IMR-90 (cell line): ENCODE measurements at regions of chr16 and their contacts with region 1.

Region 1: DNA sequence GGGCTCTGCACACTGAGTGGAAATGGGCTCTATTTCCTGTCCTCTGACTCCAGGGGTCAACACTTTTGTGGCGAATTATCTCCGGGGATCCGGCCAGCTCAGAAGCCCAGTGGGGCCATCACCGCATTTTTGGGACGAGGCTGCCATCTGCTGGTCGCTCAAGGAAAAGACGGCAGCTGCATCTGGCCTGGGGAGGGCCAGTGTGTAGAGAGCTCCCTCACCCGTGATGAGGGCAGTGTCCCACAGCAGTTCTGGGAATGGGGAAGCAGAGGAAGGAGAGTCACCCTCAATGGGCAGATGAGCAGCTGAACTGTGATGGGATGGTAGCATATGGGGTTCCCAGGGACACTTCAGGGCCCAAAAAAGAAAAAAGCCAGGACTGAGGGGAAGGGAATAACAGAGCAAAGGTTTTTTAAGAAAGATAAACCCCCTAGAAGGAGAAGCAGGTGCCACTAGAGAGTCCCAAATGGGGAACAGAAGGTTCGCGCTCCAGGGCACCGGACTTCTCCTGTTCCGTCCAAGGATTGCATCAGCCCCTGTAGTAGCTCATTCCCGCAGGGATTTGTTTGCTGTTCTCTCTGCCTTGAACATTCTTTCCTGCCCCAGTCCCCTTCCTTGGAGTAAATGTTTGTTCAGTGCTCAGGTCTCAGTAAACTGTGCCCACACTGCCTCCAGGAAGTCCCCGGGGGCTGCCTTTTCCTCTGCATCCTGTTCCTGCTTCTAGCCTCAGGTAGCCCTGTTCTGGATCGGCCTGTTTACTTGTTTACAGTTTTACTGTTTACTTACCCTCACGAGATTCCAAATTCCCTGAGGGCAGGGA is 9.3 kb upstream of the ABCC12 start:
- DNase-seq: peak; percentile 65
- ATAC-seq: peak; percentile 99
- H3K4me3 ChIP-seq: no peak overlapping the region
- H3K27ac ChIP-seq: no peak overlapping the region
- H3K4me1 ChIP-seq: no peaks in the 10 kb centered on the region; the same call in 1 of the 2 replicates
- H3K27me3 ChIP-seq: peaks cover 2% of the 10 kb centered on the region; the same call in 1 of the 2 replicates
- CTCF ChIP-seq: peak; percentile 93
- POLR2A ChIP-seq: no peak
- RAD21 ChIP-seq: peak; percentile 98

Region 2: GRCh38 chr16:46947900-46948547 is 1217.1 kb before region 1 on chr16:
- CTCF ChIA-PET with region 1: interaction called, 3 read pairs
- POLR2A ChIA-PET with region 1: no interaction called
- dilution Hi-C with region 1: no loop called
- in situ Hi-C with region 1: loop called (anchors 5 kb)
- intact Hi-C with region 1: loop called (anchors 1 kb)
- DNase-seq: peak; percentile 49
- ATAC-seq: peak; percentile 87
- H3K4me3 ChIP-seq: no peak overlapping the region
- H3K27ac ChIP-seq: no peak overlapping the region
- H3K4me1 ChIP-seq: no peaks in the 10 kb centered on the region
- H3K27me3 ChIP-seq: no peaks in the 10 kb centered on the region
- CTCF ChIP-seq: peak; percentile 67
- POLR2A ChIP-seq: no peak
- RAD21 ChIP-seq: peak; percentile 73

Region 3: DNA sequence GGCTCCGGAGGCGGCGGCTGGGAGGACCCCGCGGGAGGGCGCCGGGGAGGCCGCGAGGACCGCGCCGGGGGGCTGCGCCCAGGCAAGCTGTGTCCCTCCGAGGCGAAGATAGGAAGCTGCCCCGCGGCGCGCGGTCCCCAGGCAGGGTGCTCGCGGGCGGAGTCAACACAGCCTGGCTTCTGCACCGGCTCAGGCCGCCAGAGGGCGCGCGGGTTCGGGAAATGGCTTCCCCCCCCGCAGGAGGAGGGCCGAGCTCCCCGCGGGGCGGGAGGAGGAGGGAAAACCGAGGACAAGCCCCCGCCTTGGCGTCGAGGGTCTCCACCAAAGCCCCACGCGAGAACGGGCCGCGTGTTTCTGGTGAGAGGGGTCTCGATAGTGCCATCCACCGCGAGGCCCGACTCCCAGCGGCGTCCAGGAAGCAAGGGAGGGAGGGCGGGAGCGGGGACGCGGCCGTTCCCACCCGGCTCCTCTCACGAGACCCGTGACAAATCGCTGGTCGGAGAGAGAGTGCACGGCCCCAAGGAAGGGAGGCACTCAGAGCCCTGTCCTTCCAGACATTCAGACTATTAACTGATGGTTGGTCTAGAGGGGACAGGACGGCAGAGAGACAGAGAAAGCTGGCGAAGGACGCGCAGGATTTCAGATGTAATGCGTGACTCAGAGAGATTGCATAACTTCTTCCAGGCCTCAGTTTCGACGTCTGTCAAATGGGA is 1127.2 kb before region 1 on chr16:
- CTCF ChIA-PET with region 1: interaction called, 7 read pairs
- POLR2A ChIA-PET with region 1: no interaction called
- dilution Hi-C with region 1: no loop called
- in situ Hi-C with region 1: loop called (anchors 5 kb)
- intact Hi-C with region 1: loop called (anchors 1 kb)
- DNase-seq: peak; percentile 62
- ATAC-seq: peak; percentile 99
- H3K4me3 ChIP-seq: peak overlapping the region; percentile 74
- H3K27ac ChIP-seq: peak overlapping the region; percentile 62
- H3K4me1 ChIP-seq: no peaks in the 10 kb centered on the region
- H3K27me3 ChIP-seq: peaks cover 4% of the 10 kb centered on the region
- CTCF ChIP-seq: peak; percentile 92
- POLR2A ChIP-seq: no peak
- RAD21 ChIP-seq: peak; percentile 75

Region 4: DNA sequence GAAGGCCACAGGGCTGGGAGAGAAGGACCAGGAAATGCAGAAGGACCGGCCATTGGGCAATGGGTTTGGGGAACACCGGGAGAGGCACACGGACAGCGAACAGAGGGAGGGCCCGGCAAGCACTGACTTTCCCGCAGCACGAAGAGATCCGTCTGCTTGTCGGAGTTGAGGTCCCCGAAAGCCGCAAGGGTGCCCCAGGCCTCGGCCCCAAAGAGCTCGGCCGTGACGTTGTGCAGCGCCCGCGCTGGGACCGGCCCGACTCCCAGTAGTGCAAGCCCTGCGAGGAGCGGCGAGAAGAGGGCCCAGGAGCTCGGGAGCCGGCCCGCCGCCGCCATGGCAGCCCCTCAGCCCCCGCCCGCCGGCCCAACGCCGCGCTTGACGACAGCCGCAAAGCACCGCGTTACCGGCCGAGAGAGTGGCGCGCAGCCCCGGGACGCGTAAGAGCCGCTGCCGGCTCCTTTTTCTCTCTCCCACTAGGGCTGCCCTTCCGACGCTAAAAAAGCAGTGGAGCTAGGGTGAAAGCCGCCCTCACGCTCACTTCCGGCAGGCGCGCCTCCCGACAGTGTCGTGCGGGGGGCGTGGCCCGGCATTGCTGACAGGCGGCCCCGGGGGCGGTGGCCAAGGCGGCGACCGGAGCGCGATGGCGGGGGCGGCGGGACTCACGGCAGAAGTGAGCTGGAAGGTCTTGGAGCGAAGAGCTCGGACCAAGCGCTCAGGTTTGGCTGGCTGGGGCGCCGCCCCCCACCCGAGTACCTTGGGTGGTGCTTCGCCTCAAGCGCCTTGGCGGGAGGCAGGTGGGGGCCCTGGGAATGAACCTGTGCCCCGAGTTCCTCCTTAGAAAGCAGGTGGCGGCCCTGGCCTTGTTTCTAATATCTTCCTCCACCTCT is 704.2 kb before region 1 on chr16 and contains the starts of genes ITFG1 and PHKB:
- CTCF ChIA-PET with region 1: no interaction called
- POLR2A ChIA-PET with region 1: no interaction called
- dilution Hi-C with region 1: no loop called
- in situ Hi-C with region 1: loop called (anchors 25 kb)
- intact Hi-C with region 1: loop called (anchors 2 kb)
- DNase-seq: peak; percentile 90
- ATAC-seq: peak; percentile 95
- H3K4me3 ChIP-seq: peak within 1 kb of the TSS; percentile 84
- H3K27ac ChIP-seq: peak within 1 kb of the TSS; percentile 87
- H3K4me1 ChIP-seq: peaks cover 4% of the 10 kb centered on the region; the same call in 1 of the 2 replicates
- H3K27me3 ChIP-seq: no peaks in the 10 kb centered on the region
- CTCF ChIP-seq: peak; percentile 19; the same call in 1 of the 2 replicates
- POLR2A ChIP-seq: peak; percentile 83
- RAD21 ChIP-seq: no peak; the same call in none of the 2 replicates
- total RNA-seq, gene ITFG1: 57.5 and 60.4 TPM in 2 replicates
- total RNA-seq, gene PHKB: 58.6 and 60.0 TPM in 2 replicates

Region 5: GRCh38 chr16:48542020-48542473 is 376.9 kb after region 1 on chr16:
- CTCF ChIA-PET with region 1: no interaction called
- POLR2A ChIA-PET with region 1: no interaction called
- dilution Hi-C with region 1: no loop called
- in situ Hi-C with region 1: no loop called
- intact Hi-C with region 1: loop called (anchors 2 kb)
- DNase-seq: peak; percentile 54
- ATAC-seq: peak; percentile 79
- H3K4me3 ChIP-seq: no peak overlapping the region
- H3K27ac ChIP-seq: no peak overlapping the region
- H3K4me1 ChIP-seq: peaks cover 5% of the 10 kb centered on the region; the same call in 1 of the 2 replicates
- H3K27me3 ChIP-seq: no peaks in the 10 kb centered on the region
- CTCF ChIP-seq: peak; percentile 68
- POLR2A ChIP-seq: 0 out of 2 replicates have a peak, but pooled peaks have one; percentile 35
- RAD21 ChIP-seq: peak; percentile 89

Region 6: DNA sequence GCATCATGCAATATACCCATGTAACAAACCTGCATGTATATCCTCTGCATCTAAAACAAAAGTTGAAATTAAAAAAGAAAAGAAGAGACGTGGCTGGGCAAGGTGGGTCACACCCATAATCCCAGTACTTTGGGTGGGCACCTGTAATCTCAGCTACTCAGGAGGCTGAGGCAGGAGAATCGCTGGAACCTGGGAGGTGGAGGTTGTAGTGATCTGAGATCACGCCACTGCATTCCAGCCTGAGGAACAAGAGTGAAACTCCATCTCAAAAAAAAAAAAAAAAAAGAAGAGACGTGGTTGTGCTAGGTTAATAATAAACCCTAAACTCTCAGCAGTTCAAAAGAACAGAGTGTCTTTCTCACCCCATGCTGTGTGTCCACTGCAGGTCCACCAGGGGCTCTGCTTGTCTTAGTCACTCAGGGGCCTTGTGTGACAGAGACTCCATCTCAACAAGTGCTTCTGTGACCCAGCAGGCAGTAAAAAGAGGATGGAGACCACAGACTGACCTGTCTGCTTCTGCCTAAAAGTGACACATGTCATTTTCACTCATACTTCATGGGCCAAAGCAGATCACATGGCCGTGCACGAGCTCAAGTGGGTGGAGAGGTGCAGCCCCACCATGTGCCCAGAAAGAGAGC is 467.1 kb after region 1 on chr16:
- CTCF ChIA-PET with region 1: interaction called, 9 read pairs
- POLR2A ChIA-PET with region 1: no interaction called
- dilution Hi-C with region 1: no loop called
- in situ Hi-C with region 1: no loop called
- intact Hi-C with region 1: loop called (anchors 1 kb)
- DNase-seq: no peak
- ATAC-seq: no peak
- H3K4me3 ChIP-seq: no peak overlapping the region
- H3K27ac ChIP-seq: no peak overlapping the region
- H3K4me1 ChIP-seq: peaks cover 2% of the 10 kb centered on the region; the same call in 1 of the 2 replicates
- H3K27me3 ChIP-seq: peaks cover 4% of the 10 kb centered on the region; the same call in 1 of the 2 replicates
- CTCF ChIP-seq: no peak
- POLR2A ChIP-seq: no peak
- RAD21 ChIP-seq: no peak